Activated CD4-positive, alpha-beta memory T cell treated with anti-CD3 and anti-CD28 coated beads for 36 hours (primary cell): ENCODE measurements at regions of chr2 and their contacts with region 1.

Region 1: DNA sequence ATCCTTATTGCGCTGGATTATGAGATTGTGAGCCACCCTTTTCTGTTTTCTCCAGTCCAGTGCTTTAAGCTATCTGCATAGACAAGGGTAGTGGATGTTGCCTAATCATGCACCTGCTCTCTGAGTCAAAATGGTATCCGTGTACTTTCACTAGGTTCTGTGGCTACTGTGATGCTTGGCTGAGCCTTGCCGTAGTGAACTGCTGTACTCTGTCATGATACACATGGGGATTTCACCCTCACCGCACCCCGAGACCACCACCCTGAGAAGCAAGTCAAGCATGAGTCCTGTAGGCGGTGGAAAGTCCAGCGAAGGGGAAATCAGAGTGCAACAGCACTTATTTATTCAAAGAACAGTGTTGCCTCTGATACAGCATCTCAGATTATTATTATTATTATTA is 55.0 kb downstream of the ARHGAP25 start:
- DNase-seq: peak; percentile 83
- H3K4me3 Mint-ChIP-seq: no peak overlapping the region
- H3K27ac Mint-ChIP-seq: peak overlapping the region; percentile 25
- H3K4me1 Mint-ChIP-seq: peaks cover 53% of the 10 kb centered on the region
- H3K27me3 Mint-ChIP-seq: no peaks in the 10 kb centered on the region

Region 2: DNA sequence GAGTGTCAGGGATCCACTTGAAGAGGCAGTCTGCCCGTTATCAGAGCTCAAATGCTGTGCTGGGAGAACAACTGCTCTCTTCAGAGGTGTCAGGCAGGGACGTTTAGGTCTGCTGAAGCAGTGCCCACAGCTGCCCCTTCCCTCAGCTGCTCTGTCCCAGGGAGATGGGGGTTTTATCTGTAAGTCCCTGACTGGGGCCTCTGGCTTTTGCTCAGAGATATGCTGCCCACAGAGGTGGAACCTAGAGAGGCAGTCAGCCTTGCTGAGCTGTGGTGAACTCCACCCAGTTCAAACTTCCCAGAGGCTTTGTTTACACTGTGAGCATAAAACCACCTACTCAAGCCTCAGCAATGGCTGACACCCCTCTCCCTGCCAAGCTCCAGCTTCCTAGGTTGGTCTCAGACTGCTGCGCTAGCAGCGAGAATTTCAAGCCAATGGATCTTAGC is 386.4 kb before region 1 on chr2:
- CTCF ChIA-PET with region 1: no interaction called
- POLR2A ChIA-PET with region 1: no interaction called
- intact Hi-C with region 1: no loop called
- DNase-seq: no peak
- H3K4me3 Mint-ChIP-seq: no peak overlapping the region
- H3K27ac Mint-ChIP-seq: no peak overlapping the region
- H3K4me1 Mint-ChIP-seq: peaks cover 12% of the 10 kb centered on the region
- H3K27me3 Mint-ChIP-seq: peaks cover 4% of the 10 kb centered on the region

Region 3: GRCh38 chr2:68774569-68775271 is 14.9 kb before region 1 on chr2:
- CTCF ChIA-PET with region 1: interaction called, 4 read pairs
- POLR2A ChIA-PET with region 1: interaction called, 5 read pairs
- intact Hi-C with region 1: loop called (anchors 1 kb)
- DNase-seq: peak; percentile 83
- H3K4me3 Mint-ChIP-seq: peak overlapping the region; percentile 65
- H3K27ac Mint-ChIP-seq: peak overlapping the region; percentile 85
- H3K4me1 Mint-ChIP-seq: peaks cover 87% of the 10 kb centered on the region
- H3K27me3 Mint-ChIP-seq: no peaks in the 10 kb centered on the region